Naive thymus-derived CD4-positive, alpha-beta T cell (primary cell): ENCODE measurements at regions of chr2 and their contacts with region 1.

Region 1: GRCh38 chr2:204982303-204982702 is 437.0 kb downstream of the PARD3B start:
- DNase-seq: no peak
- ATAC-seq: peak; percentile 24
- H3K4me3 ChIP-seq: no peak overlapping the region
- H3K4me3 Mint-ChIP-seq: peak overlapping the region in 4 of 10 donors; percentile 11 to 66 (median 24)
- H3K27ac ChIP-seq: no peak overlapping the region
- H3K27ac Mint-ChIP-seq: peak overlapping the region in 7 of 9 donors; percentile 15 to 70 (median 65)
- H3K4me1 ChIP-seq: peaks cover 0 to 10% of the 10 kb centered on the region in 2 donors
- H3K4me1 Mint-ChIP-seq: peaks cover 5 to 43% (median 27%) of the 10 kb centered on the region in 7 donors
- H3K27me3 ChIP-seq: no peaks in the 10 kb centered on the region
- H3K27me3 Mint-ChIP-seq: no peaks in the 10 kb centered on the region

Region 2: DNA sequence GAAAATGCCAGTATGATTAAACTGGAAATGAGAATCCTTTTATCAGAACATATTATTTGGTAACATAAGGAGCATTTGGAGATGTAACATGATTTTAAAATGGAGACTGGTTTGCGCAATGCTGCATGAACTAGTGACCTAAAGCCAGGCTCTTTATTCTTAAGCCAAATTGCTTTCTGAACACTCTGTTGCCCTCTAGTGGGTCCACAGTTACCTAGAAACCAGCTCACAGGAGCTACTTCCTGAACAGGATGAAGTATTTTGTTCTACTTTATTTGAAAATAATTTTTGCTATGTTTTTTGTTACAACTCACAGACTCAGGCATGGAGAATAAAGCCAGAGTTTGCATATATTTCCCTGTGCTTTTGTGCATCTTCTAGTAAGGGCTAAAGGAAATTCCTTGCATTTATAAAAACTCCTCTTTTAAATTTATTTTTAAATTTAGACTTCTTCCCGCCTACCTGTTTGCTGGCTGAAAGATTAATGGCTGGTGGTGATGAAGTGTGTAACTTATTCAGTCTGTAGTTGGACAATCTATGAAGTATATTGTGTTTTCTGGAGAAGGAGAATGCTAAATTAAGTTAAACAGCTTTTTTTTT is 290.3 kb before region 1 on chr2:
- CTCF ChIA-PET with region 1: no interaction called
- POLR2A ChIA-PET with region 1: no interaction called
- intact Hi-C with region 1: loop called in 1 of 2 experiments (anchors 10 kb)
- DNase-seq: peak in 6 of 9 donors; percentile 4 to 42 (median 26)
- ATAC-seq: peak; percentile 55
- H3K4me3 ChIP-seq: no peak overlapping the region
- H3K4me3 Mint-ChIP-seq: no peak overlapping the region
- H3K27ac ChIP-seq: no peak overlapping the region
- H3K27ac Mint-ChIP-seq: no peak overlapping the region
- H3K4me1 ChIP-seq: peaks cover 0 to 6% of the 10 kb centered on the region in 2 donors
- H3K4me1 Mint-ChIP-seq: peaks cover 0 to 15% (median 9%) of the 10 kb centered on the region in 7 donors
- H3K27me3 ChIP-seq: no peaks in the 10 kb centered on the region
- H3K27me3 Mint-ChIP-seq: peaks cover 0 to 13% (median 0%) of the 10 kb centered on the region in 5 donors

Region 3: GRCh38 chr2:205002390-205002789 is 20.1 kb after region 1 on chr2:
- CTCF ChIA-PET with region 1: no interaction called
- POLR2A ChIA-PET with region 1: no interaction called
- intact Hi-C with region 1: loop called in 1 of 2 experiments (anchors 2 kb)
- DNase-seq: peak in 4 of 9 donors; percentile 6 to 38 (median 20)
- ATAC-seq: no peak
- H3K4me3 ChIP-seq: no peak overlapping the region
- H3K4me3 Mint-ChIP-seq: peak overlapping the region; percentile 10 to 75 (median 32)
- H3K27ac ChIP-seq: no peak overlapping the region
- H3K27ac Mint-ChIP-seq: peak overlapping the region in 5 of 9 donors; percentile 1 to 74 (median 34)
- H3K4me1 ChIP-seq: peaks cover 0 to 14% of the 10 kb centered on the region in 2 donors
- H3K4me1 Mint-ChIP-seq: peaks cover 18 to 43% (median 36%) of the 10 kb centered on the region in 7 donors
- H3K27me3 ChIP-seq: no peaks in the 10 kb centered on the region
- H3K27me3 Mint-ChIP-seq: no peaks in the 10 kb centered on the region